ENCODE measurements at regions of chr11 and their contacts with region 1.

Region 1: GRCh38 chr11:14643697-14644225 is at the start of gene PDE3B:
- DNase-seq: peak; percentile 89
- ATAC-seq: peak; percentile 77
- H3K4me3 Mint-ChIP-seq: peak within 1 kb of the TSS; percentile 81
- H3K27ac Mint-ChIP-seq: peak within 1 kb of the TSS; percentile 91
- H3K4me1 Mint-ChIP-seq: peaks cover 40% of the 10 kb centered on the region
- H3K27me3 Mint-ChIP-seq: no peaks in the 10 kb centered on the region
- total RNA-seq, gene PDE3B: 74.8 to 81.4 TPM

Region 2: GRCh38 chr11:14519917-14520746 is 123.6 kb before region 1 on chr11 and contains the start of gene PSMA1:
- CTCF ChIA-PET with region 1: interaction called, 19 read pairs
- POLR2A ChIA-PET with region 1: interaction called, 35 read pairs
- DNase-seq: peak; percentile 96
- ATAC-seq: peak; percentile 94
- H3K4me3 Mint-ChIP-seq: peak within 1 kb of the TSS; percentile 93
- H3K27ac Mint-ChIP-seq: peak within 1 kb of the TSS; percentile 94
- H3K4me1 Mint-ChIP-seq: peaks cover 29% of the 10 kb centered on the region
- H3K27me3 Mint-ChIP-seq: no peaks in the 10 kb centered on the region
- total RNA-seq, gene PSMA1: 211 to 215 TPM

Region 3: GRCh38 chr11:14537134-14537599 is 106.6 kb before region 1 on chr11:
- CTCF ChIA-PET with region 1: interaction called, 22 read pairs
- POLR2A ChIA-PET with region 1: interaction called, 16 read pairs
- DNase-seq: peak; percentile 66
- ATAC-seq: peak; percentile 69
- H3K4me3 Mint-ChIP-seq: peak overlapping the region; percentile 53
- H3K27ac Mint-ChIP-seq: peak overlapping the region; percentile 58
- H3K4me1 Mint-ChIP-seq: peaks cover 36% of the 10 kb centered on the region
- H3K27me3 Mint-ChIP-seq: no peaks in the 10 kb centered on the region

Region 4: DNA sequence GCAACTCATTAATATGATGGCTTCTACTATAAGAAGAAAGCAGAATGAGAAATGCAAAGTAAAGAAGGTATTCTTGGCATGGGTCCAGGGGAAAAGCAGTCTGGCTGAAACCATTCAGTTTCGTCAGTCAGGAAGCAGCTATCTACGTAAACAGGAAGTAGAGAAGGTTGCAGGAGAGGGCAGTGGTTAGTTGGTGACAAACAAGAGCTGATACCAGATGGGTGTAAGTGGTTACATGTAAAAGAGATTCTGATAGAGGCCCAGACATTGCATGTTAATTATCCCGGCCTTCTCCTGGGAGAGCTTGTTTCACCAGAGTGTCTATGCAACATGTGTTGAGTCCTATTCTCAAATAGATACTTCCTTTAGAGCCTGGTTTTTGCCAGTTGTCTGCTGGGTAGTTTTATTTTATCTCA is 65.2 kb before region 1 on chr11:
- CTCF ChIA-PET with region 1: interaction called, 16 read pairs
- POLR2A ChIA-PET with region 1: interaction called, 36 read pairs
- DNase-seq: peak; percentile 84
- ATAC-seq: peak; percentile 97
- H3K4me3 Mint-ChIP-seq: peak overlapping the region; percentile 42
- H3K27ac Mint-ChIP-seq: peak overlapping the region; percentile 90
- H3K4me1 Mint-ChIP-seq: peaks cover 56% of the 10 kb centered on the region
- H3K27me3 Mint-ChIP-seq: no peaks in the 10 kb centered on the region

Region 5: GRCh38 chr11:14764579-14765527 is 121.1 kb after region 1 on chr11:
- CTCF ChIA-PET with region 1: interaction called, 5 read pairs
- POLR2A ChIA-PET with region 1: interaction called, 52 read pairs
- DNase-seq: peak; percentile 77
- ATAC-seq: peak; percentile 79
- H3K4me3 Mint-ChIP-seq: no peak overlapping the region
- H3K27ac Mint-ChIP-seq: no peak overlapping the region
- H3K4me1 Mint-ChIP-seq: peaks cover 46% of the 10 kb centered on the region
- H3K27me3 Mint-ChIP-seq: no peaks in the 10 kb centered on the region

Region 6: GRCh38 chr11:14892036-14892567 is 248.3 kb after region 1 on chr11 and contains the start of gene CYP2R1:
- CTCF ChIA-PET with region 1: interaction called, 9 read pairs
- POLR2A ChIA-PET with region 1: interaction called, 20 read pairs
- DNase-seq: peak; percentile 95
- ATAC-seq: peak; percentile 95
- H3K4me3 Mint-ChIP-seq: peak within 1 kb of the TSS; percentile 82
- H3K27ac Mint-ChIP-seq: peak within 1 kb of the TSS; percentile 90
- H3K4me1 Mint-ChIP-seq: peaks cover 55% of the 10 kb centered on the region
- H3K27me3 Mint-ChIP-seq: no peaks in the 10 kb centered on the region
- total RNA-seq, gene CYP2R1: 14.4 to 18.8 TPM

Measured in activated CD8-positive, alpha-beta T cell treated with anti-CD3 and anti-CD28 coated beads, Interleukin-2, amount 10 ng/mL, durations not matched to agents 7 days and 5 days (primary cell).